Naive thymus-derived CD4-positive, alpha-beta T cell (primary cell): ENCODE measurements at regions of chr18 and their contacts with region 1.

Region 1: GRCh38 chr18:45967007-45967706 is at the start of gene EPG5:
- DNase-seq: peak; percentile 73 to 91 (median 90)
- ATAC-seq: peak; percentile 98
- H3K4me3 ChIP-seq: peak within 1 kb of the TSS; percentile 79
- H3K4me3 Mint-ChIP-seq: peak within 1 kb of the TSS; percentile 94 to 100 (median 97)
- H3K27ac ChIP-seq: peak within 1 kb of the TSS; percentile 86
- H3K27ac Mint-ChIP-seq: peak within 1 kb of the TSS; percentile 84 to 98 (median 97)
- H3K4me1 ChIP-seq: peaks cover 14 to 25% of the 10 kb centered on the region in 2 donors
- H3K4me1 Mint-ChIP-seq: peaks cover 33 to 55% (median 47%) of the 10 kb centered on the region in 7 donors
- H3K27me3 ChIP-seq: no peaks in the 10 kb centered on the region
- H3K27me3 Mint-ChIP-seq: no peaks in the 10 kb centered on the region
- total RNA-seq, gene EPG5: 26.0 to 54.8 (median 44.7) TPM

Region 2: DNA sequence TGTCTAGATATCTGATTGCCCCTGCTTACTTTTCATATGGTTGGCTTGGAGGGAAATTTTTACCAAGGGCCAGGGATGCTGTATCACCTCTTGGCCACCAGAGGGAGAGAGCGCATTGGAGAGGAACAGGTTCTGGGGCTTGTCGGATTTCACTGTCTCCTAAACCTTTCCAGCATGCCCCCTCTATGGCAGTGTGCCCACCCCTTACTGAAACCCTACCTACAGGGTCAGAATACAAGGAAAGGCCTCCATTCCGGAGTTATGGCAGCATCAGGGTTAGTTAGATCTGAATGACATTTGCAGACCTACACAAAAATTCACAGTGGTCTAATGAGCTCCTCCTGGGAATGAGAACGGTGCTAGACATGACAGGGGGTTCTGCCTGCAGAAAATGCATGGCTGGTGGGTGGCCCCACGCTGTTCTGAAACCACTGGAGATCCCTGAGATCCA is 346.1 kb before region 1 on chr18:
- CTCF ChIA-PET with region 1: no interaction called
- POLR2A ChIA-PET with region 1: no interaction called
- intact Hi-C with region 1: loop called in 1 of 2 experiments (anchors 2 kb)
- DNase-seq: peak in 8 of 9 donors; percentile 8 to 61 (median 40)
- ATAC-seq: peak; percentile 76
- H3K4me3 ChIP-seq: no peak overlapping the region
- H3K4me3 Mint-ChIP-seq: no peak overlapping the region
- H3K27ac ChIP-seq: no peak overlapping the region
- H3K27ac Mint-ChIP-seq: no peak overlapping the region
- H3K4me1 ChIP-seq: no peaks in the 10 kb centered on the region
- H3K4me1 Mint-ChIP-seq: no peaks in the 10 kb centered on the region
- H3K27me3 ChIP-seq: no peaks in the 10 kb centered on the region
- H3K27me3 Mint-ChIP-seq: peaks cover 0 to 27% (median 10%) of the 10 kb centered on the region in 5 donors

Region 3: GRCh38 chr18:45993389-45993788 is 26.2 kb after region 1 on chr18:
- CTCF ChIA-PET with region 1: interaction called, 3 read pairs
- POLR2A ChIA-PET with region 1: no interaction called
- intact Hi-C with region 1: loop called in 1 of 2 experiments (anchors 1 kb)
- DNase-seq: no peak
- ATAC-seq: no peak
- H3K4me3 ChIP-seq: no peak overlapping the region
- H3K4me3 Mint-ChIP-seq: no peak overlapping the region
- H3K27ac ChIP-seq: no peak overlapping the region
- H3K27ac Mint-ChIP-seq: no peak overlapping the region
- H3K4me1 ChIP-seq: peaks cover 0 to 19% of the 10 kb centered on the region in 2 donors
- H3K4me1 Mint-ChIP-seq: peaks cover 9 to 29% (median 25%) of the 10 kb centered on the region in 7 donors
- H3K27me3 ChIP-seq: no peaks in the 10 kb centered on the region
- H3K27me3 Mint-ChIP-seq: no peaks in the 10 kb centered on the region

Region 4: GRCh38 chr18:46097801-46098615 is 130.9 kb after region 1 on chr18 and contains the start of gene ATP5F1A:
- CTCF ChIA-PET with region 1: no interaction called
- POLR2A ChIA-PET with region 1: no interaction called
- intact Hi-C with region 1: loop called (anchors 1 kb)
- DNase-seq: peak; percentile 69 to 86 (median 80)
- ATAC-seq: peak; percentile 94
- H3K4me3 ChIP-seq: peak within 1 kb of the TSS; percentile 92
- H3K4me3 Mint-ChIP-seq: peak within 1 kb of the TSS; percentile 92 to 99 (median 96)
- H3K27ac ChIP-seq: peak within 1 kb of the TSS; percentile 94
- H3K27ac Mint-ChIP-seq: peak within 1 kb of the TSS; percentile 94 to 99 (median 97)
- H3K4me1 ChIP-seq: peaks cover 18 to 32% of the 10 kb centered on the region in 2 donors
- H3K4me1 Mint-ChIP-seq: peaks cover 18 to 43% (median 35%) of the 10 kb centered on the region in 7 donors
- H3K27me3 ChIP-seq: no peaks in the 10 kb centered on the region
- H3K27me3 Mint-ChIP-seq: peaks cover 0 to 2% (median 0%) of the 10 kb centered on the region in 5 donors
- total RNA-seq, gene ATP5F1A: 181 to 311 (median 212) TPM

Region 5: GRCh38 chr18:47150029-47150823 is 1183.1 kb after region 1 on chr18 and contains the start of gene HDHD2:
- CTCF ChIA-PET with region 1: no interaction called
- POLR2A ChIA-PET with region 1: no interaction called
- intact Hi-C with region 1: loop called in 1 of 2 experiments (anchors 2 kb)
- DNase-seq: peak; percentile 52 to 90 (median 66)
- ATAC-seq: peak; percentile 86
- H3K4me3 ChIP-seq: peak within 1 kb of the TSS; percentile 88
- H3K4me3 Mint-ChIP-seq: peak within 1 kb of the TSS; percentile 93 to 99 (median 98)
- H3K27ac ChIP-seq: peak within 1 kb of the TSS; percentile 83
- H3K27ac Mint-ChIP-seq: peak within 1 kb of the TSS; percentile 96 to 100 (median 97)
- H3K4me1 ChIP-seq: peaks cover 18 to 24% of the 10 kb centered on the region in 2 donors
- H3K4me1 Mint-ChIP-seq: peaks cover 28 to 64% (median 57%) of the 10 kb centered on the region in 7 donors
- H3K27me3 ChIP-seq: no peaks in the 10 kb centered on the region
- H3K27me3 Mint-ChIP-seq: no peaks in the 10 kb centered on the region
- total RNA-seq, gene HDHD2: 22.7 to 45.7 (median 38.0) TPM